HEK293 (cell line): ENCODE measurements at regions of chr10 and their contacts with region 1.

Region 1: DNA sequence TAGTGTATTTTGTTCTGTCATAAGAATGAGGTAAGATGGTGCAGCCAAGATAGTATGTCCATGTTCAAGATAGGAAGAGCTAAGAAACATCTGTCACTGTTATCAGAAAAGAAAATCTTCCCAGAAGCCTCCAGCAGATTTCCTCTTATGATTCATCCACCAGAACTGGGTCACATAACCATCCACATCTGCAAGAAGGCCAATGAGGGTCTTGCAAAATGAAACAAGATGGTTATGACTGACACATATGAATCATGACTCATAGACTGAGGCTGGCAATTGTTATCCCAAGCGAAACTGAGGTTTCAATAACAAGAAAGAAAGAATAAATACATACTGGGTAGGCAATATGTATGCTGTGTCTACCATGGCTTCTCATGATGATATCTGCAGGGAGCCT is 30.3 kb downstream of the CCNJ start:
- H3K4me3 ChIP-seq: no peak overlapping the region
- H3K27ac ChIP-seq: no peak overlapping the region
- H3K4me1 ChIP-seq: peaks cover 3% of the 10 kb centered on the region
- CTCF ChIP-seq: no peak

Region 2: DNA sequence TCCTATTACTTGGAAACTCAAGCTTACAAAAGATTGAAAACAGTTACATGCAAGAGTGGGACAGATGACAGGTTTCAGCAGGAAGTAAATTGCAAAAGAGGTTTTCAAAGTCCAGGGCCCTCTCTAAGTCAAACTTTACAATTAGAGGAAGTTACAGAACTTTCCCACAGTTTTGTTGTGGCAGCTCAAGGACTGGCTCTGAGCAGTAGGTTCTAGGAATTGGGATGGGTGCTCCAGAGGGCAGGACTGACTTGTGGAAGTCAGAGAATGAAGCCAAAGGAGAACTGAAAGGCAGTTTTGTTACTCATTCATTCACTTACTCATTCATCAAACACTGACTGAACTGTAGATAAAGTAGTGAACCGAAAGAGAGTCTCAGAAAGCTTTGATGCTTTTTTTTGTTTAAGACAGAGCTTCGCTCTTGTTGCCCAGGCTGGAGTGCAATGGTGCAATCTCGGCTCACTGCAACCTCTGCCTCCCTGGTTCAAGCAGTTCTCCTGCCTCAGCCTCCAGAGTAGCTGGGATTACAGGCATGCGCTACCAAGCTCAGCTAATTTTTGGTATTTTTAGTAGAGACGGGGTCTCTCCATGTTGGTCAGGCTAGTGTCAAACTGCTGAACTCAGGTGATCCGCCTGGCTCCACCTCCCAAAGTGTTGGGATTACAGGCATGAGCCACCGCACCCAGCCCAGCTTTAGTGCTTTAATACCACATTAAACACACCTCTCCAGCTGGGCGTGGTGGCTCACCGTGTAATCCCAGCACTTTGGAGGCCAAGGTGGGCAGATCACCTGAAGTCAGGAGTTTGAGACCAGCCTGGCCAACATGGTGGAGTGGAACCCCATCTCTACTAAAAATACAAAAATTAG is 97.1 kb before region 1 on chr10:
- CTCF ChIA-PET with region 1: no interaction called
- POLR2A ChIA-PET with region 1: no interaction called
- H3K4me3 ChIP-seq: no peak overlapping the region
- H3K27ac ChIP-seq: no peak overlapping the region
- H3K4me1 ChIP-seq: no peaks in the 10 kb centered on the region
- CTCF ChIP-seq: no peak

Region 3: DNA sequence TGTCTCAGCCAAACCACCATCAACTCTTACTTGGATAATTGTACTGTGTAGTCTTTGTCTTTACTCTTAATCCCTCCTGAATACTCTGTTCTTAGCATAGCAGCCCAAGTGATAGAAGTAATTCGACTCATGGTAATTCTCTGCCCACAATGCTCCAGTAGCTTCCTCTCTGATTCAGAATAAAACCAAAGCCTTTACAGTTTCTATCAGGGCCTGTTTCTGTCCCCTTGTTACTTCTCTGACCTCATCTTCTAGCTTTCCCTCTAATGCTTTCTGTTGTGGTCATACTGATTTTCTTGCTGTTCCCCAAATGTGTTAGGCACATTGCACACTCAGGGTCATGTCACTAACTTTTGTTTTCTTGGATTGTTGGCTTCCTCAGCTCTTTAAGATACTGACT is 64.4 kb after region 1 on chr10:
- CTCF ChIA-PET with region 1: no interaction called
- POLR2A ChIA-PET with region 1: interaction called, 14 read pairs
- H3K4me3 ChIP-seq: no peak overlapping the region
- H3K27ac ChIP-seq: no peak overlapping the region
- H3K4me1 ChIP-seq: no peaks in the 10 kb centered on the region
- CTCF ChIP-seq: no peak